ENCODE measurements at regions of chr10 and their contacts with region 1.

Region 1: GRCh38 chr10:102802920-102803534 is 34.2 kb downstream of the CYP17A1 start:
- DNase-seq: peak; percentile 66
- H3K4me3 Mint-ChIP-seq: no peak overlapping the region
- H3K27ac Mint-ChIP-seq: peak overlapping the region; percentile 93
- H3K4me1 Mint-ChIP-seq: peaks cover 35% of the 10 kb centered on the region
- H3K27me3 Mint-ChIP-seq: no peaks in the 10 kb centered on the region

Region 2: DNA sequence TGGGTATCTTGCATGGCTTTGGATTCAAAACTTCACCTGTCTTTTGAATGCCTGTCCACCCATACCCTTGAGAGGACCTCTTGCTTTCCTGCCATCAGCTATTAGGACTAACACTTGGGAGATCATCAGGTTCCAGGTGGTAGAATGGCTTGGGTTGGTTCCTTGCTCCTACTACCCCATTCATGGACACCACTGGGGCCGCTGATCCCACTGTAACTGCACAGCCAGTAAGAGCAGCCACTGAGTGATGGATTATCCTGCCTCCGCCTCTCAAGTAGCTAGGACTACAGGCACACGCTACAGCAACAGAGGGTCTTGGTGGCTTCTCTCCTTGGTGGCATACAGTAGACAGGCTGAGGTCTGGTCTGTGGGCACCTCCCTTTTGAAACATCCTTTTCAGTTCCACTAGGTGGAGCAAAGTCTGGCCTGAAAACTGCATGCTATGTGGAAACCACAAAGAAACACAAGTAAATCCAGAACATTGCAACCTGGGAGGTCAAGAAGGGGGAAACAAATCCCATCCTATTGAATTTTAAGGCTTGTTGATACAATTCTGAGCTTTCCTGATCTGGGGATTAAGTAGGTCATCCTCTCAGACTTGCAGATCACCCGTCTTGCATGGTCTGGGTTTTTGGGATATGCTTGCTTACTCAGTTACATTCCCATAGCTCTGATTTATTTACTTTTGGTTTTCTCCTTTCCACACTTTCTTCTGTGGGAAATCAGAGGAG is 49.9 kb before region 1 on chr10:
- CTCF ChIA-PET with region 1: no interaction called
- intact Hi-C with region 1: loop called (anchors 2 kb)
- DNase-seq: peak; percentile 45
- H3K4me3 Mint-ChIP-seq: no peak overlapping the region
- H3K27ac Mint-ChIP-seq: no peak overlapping the region
- H3K4me1 Mint-ChIP-seq: peaks cover 39% of the 10 kb centered on the region
- H3K27me3 Mint-ChIP-seq: no peaks in the 10 kb centered on the region

Region 3: DNA sequence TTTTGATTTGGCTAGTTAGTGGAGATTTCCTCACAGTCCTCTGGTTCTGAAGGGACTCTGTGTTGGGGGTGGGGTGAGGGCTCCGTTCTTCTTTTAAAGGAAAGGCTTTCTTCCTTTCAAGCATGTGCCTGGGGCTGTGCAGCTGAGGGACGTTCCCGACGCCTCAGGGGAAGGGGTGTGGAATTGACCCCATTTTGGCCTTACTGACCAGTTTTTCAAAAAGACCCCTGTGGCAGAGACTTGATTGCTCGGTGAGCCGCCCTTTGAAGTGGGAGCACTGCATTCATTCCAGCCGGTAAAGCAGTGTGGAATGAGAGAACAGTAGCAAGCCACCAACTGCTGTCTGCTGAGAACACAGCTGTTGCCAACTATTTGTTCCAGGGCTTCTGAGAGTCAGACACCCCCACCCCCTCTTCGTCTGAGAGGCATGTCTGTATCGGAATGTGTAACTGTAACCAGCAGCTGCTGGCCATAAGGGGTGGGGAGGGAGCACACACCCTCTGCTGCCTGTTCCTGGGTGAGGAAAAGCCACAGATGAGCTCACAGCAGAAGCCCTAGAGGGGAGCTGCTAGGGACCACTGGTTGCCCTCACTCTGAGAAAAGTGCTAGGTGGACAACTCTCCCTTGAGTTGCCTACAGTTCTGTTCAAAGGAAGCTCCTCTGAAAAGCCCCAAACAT is 26.1 kb before region 1 on chr10:
- CTCF ChIA-PET with region 1: no interaction called
- intact Hi-C with region 1: loop called (anchors 1 kb)
- DNase-seq: peak; percentile 64
- H3K4me3 Mint-ChIP-seq: no peak overlapping the region
- H3K27ac Mint-ChIP-seq: no peak overlapping the region
- H3K4me1 Mint-ChIP-seq: peaks cover 77% of the 10 kb centered on the region
- H3K27me3 Mint-ChIP-seq: no peaks in the 10 kb centered on the region

Measured in activated naive CD4-positive, alpha-beta T cell treated with anti-CD3 and anti-CD28 coated beads for 36 hours (primary cell).